ENCODE measurements at regions of chr12 and their contacts with region 1.

Region 1: DNA sequence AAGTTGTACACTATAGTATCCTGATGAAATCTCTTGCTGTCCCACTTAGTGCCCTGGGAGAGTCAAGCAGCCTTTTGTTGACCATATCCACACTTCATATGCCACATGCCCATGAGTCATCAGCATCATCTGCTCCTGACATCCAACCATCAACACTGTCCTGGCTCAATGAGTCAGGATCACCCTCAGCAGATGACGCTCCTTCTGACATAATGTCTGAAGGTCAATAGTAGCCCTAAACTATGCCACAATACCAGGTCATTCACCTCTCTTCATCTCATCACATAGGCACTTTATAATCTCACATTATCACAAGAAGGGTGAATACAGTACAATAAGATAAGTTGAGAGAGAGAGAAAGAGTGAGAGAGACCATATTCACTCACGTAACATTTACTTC is 369.0 kb upstream of the FAR2 start:
- DNase-seq: no peak
- ATAC-seq: peak in 1 of 2 donors; percentile 19

Region 2: GRCh38 chr12:28693565-28694219 is 86.4 kb before region 1 on chr12:
- intact Hi-C with region 1: no loop called
- DNase-seq: no peak
- ATAC-seq: no peak

Region 3: DNA sequence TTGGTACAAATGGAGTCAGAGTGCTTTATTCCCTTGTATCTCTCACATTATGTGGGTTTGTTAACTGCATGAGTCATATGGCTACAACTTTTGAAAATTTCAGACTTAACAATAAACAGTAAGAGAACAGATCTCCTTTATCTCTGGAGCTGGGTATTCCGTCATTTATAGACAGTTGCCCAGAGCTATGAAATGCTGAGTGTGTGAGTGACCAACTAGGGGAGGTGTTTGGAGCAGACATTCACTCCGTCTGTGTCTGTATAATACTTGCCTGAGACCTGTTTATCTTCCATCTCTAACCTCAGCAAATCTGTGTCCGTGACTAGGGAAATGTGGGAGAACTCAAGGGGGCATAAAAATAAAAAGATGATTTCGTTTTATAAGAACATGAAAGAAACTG is 89.1 kb after region 1 on chr12:
- intact Hi-C with region 1: loop called in 1 of 2 experiments (anchors 10 kb)
- DNase-seq: no peak
- ATAC-seq: peak in 1 of 2 donors; percentile 86

Region 4: GRCh38 chr12:28899951-28900350 is 119.9 kb after region 1 on chr12:
- intact Hi-C with region 1: no loop called
- DNase-seq: no peak
- ATAC-seq: no peak